ENCODE measurements at regions of chr9 and their contacts with region 1.

Region 1: DNA sequence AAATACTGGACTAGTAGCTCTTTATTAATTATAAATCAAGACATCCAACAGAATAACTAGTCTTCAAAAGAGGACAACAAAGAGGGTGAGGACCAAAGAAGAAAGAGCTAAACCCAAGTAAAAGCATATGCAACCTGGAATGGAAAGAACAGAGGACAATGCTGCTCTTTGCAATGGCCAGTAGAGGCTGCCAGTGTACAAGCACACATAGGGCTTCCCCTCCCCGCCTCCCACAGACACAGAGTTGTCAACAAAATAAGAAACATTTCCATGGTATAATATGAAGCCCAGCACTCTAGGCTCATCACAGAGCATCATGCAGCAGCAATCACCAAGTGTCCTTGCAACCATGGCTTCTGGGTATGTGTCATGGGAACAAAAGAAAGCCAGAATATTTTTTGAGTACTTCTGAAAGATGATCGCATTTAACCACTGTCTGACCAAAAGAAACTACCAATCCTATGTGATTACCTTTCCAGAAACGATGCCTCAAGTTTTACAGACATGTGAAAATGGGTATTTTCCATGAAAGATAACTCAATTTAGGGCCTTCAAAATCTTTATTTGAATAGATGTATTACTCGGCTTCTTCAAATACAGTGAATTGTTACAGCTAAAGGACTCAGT is 58.1 kb downstream of the RFX3 start:
- DNase-seq: peak; percentile 49 to 70 (median 60)
- ATAC-seq: peak; percentile 79 to 96 (median 94)
- H3K4me3 ChIP-seq: no peak overlapping the region
- H3K27ac ChIP-seq: no peak overlapping the region
- H3K4me1 ChIP-seq: peaks cover 0 to 25% (median 7%) of the 10 kb centered on the region in 12 donors
- H3K27me3 ChIP-seq: no peaks in the 10 kb centered on the region
- CTCF ChIP-seq: peak; percentile 67 to 90 (median 82)
- POLR2A ChIP-seq: no peak

Region 2: DNA sequence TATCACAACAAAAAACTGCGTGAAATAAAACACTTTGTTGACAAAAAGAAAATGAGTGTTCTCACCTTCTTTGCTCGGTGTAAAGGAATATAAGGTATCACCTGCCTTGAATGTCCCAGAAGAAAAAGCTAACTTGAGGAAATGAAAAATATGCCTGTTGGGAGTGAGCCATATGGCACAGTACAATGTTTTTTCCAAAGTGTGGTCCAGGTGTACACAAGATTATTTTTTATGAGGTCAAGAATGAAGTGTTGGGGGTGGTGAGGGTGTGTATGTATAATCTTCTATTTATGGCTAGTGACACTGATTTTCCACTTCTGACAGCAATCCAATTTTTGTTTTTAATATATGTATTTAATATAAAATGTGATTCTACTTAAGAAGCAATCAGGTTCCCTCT is 76.3 kb before region 1 on chr9:
- intact Hi-C with region 1: no loop called
- DNase-seq: no peak
- ATAC-seq: no peak
- H3K4me3 ChIP-seq: no peak overlapping the region
- H3K27ac ChIP-seq: no peak overlapping the region
- H3K4me1 ChIP-seq: peaks cover 0 to 1% (median 0%) of the 10 kb centered on the region in 12 donors
- H3K27me3 ChIP-seq: no peaks in the 10 kb centered on the region
- CTCF ChIP-seq: no peak
- POLR2A ChIP-seq: no peak

Region 3: DNA sequence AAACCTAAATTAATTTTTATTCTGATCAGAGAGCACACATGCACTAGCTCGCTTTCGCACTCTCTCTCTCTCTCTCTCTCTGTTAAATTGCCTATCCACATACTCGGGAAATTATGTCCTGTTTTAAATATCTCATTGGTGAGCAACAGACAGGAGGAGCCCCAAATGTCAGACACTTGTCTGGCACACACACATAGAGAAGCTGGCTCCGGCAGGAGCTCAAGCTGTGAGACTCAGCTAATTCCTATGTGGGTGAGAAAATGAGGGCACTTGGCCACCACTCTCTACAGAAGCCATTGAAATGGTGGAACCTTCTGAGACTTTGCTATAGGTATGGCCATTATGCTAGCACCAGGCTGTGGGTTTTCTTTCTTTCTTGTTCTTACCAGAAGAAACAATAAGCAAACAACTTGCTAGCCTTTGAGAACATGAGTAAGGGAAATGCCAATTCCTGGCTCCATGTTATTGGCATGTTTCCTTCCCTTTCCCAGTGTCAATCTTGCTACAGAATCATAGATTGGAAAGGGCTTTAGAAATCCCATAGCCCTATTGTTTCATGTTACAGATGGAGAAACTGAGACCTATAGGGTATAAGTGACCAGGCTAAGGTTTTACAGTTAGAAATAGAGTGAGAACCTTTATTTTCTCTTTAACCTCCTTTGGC is 49.1 kb after region 1 on chr9:
- intact Hi-C with region 1: loop called in 3 of 10 experiments (anchors 5 to 10 kb)
- DNase-seq: no peak
- ATAC-seq: no peak
- H3K4me3 ChIP-seq: no peak overlapping the region
- H3K27ac ChIP-seq: no peak overlapping the region
- H3K4me1 ChIP-seq: peaks cover 0 to 22% (median 0%) of the 10 kb centered on the region in 12 donors
- H3K27me3 ChIP-seq: no peaks in the 10 kb centered on the region
- CTCF ChIP-seq: no peak
- POLR2A ChIP-seq: no peak

Region 4: GRCh38 chr9:3525836-3526164 is 58.1 kb after region 1 on chr9 and contains the start of gene RFX3:
- intact Hi-C with region 1: loop called in 4 of 10 experiments (anchors 5 to 10 kb)
- DNase-seq: peak; percentile 92 to 95 (median 94)
- ATAC-seq: peak; percentile 95 to 97 (median 96)
- H3K4me3 ChIP-seq: peak within 1 kb of the TSS; percentile 47 to 95 (median 83)
- H3K27ac ChIP-seq: peak within 1 kb of the TSS; percentile 97 to 100 (median 100)
- H3K4me1 ChIP-seq: peaks cover 0 to 45% (median 17%) of the 10 kb centered on the region in 12 donors
- H3K27me3 ChIP-seq: no peaks in the 10 kb centered on the region
- CTCF ChIP-seq: no peak
- POLR2A ChIP-seq: peak in 1 of 2 donors; percentile 29
- total RNA-seq, gene RFX3: 1.7 to 8.3 (median 2.9) TPM

Region 5: DNA sequence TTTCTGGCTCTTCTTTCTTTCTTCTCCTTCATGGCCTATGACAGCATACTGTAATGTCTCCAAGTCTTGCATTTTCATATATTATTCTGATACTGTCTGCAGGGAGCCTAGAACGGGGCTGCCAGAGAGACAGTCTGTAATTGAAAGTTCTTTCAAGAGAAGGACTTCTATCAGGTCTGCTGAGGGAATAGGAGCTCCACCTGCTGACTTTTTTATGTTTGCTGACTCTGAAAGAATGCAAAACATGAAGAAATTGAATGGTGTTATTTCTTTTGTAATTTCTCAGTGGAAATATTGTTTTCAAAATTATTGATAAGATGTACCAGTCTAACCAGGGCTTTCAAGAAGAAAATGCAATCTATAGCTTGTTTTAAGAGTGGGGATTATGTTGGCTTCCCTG is 179.9 kb after region 1 on chr9:
- intact Hi-C with region 1: loop called in 3 of 10 experiments (anchors 5 to 10 kb)
- DNase-seq: no peak
- ATAC-seq: no peak
- H3K4me3 ChIP-seq: no peak overlapping the region
- H3K27ac ChIP-seq: no peak overlapping the region
- H3K4me1 ChIP-seq: no peaks in the 10 kb centered on the region
- H3K27me3 ChIP-seq: no peaks in the 10 kb centered on the region
- CTCF ChIP-seq: peak in 4 of 12 donors; percentile 7 to 10 (median 9)
- POLR2A ChIP-seq: no peak

Region 6: DNA sequence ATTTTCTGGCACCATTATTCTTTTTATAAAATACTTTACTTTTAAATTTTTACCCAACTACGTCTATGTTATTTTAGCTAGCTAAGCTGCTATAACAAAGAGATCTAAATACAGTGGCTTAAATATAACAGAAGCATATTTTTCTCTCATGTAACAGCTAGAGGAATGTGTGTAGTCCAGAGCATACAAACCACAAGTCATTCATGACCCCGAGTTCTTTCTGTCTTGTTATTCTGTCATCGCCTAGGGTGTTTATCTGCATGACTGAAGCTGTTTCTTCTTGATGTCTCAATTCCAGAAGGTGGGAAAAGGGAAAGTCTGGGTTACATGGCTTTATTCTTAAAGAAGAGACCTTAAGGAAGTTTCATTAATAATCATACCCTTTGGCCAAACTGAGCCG is 195.0 kb after region 1 on chr9:
- intact Hi-C with region 1: no loop called
- DNase-seq: no peak
- ATAC-seq: no peak
- H3K4me3 ChIP-seq: no peak overlapping the region
- H3K27ac ChIP-seq: no peak overlapping the region
- H3K4me1 ChIP-seq: peaks cover 0 to 4% (median 0%) of the 10 kb centered on the region in 12 donors
- H3K27me3 ChIP-seq: no peaks in the 10 kb centered on the region
- CTCF ChIP-seq: no peak
- POLR2A ChIP-seq: no peak

Region 7: GRCh38 chr9:3848445-3849114 is 380.9 kb after region 1 on chr9:
- intact Hi-C with region 1: no loop called
- DNase-seq: no peak
- ATAC-seq: no peak
- H3K4me3 ChIP-seq: no peak overlapping the region
- H3K27ac ChIP-seq: no peak overlapping the region
- H3K4me1 ChIP-seq: no peaks in the 10 kb centered on the region
- H3K27me3 ChIP-seq: no peaks in the 10 kb centered on the region
- CTCF ChIP-seq: no peak
- POLR2A ChIP-seq: no peak

Region 8: GRCh38 chr9:4117835-4118610 is 650.3 kb after region 1 on chr9:
- intact Hi-C with region 1: loop called in 1 of 10 experiments (anchors 10 kb)
- DNase-seq: peak in 1 of 5 donors; percentile 36
- ATAC-seq: peak in 1 of 4 donors; percentile 41
- H3K4me3 ChIP-seq: no peak overlapping the region
- H3K27ac ChIP-seq: peak overlapping the region in 3 of 12 donors; percentile 13 to 32 (median 25)
- H3K4me1 ChIP-seq: peaks cover 0 to 51% (median 0%) of the 10 kb centered on the region in 12 donors
- H3K27me3 ChIP-seq: no peaks in the 10 kb centered on the region
- CTCF ChIP-seq: peak in 10 of 12 donors; percentile 12 to 51 (median 40)
- POLR2A ChIP-seq: no peak

Region 9: GRCh38 chr9:4228606-4229005 is 760.9 kb after region 1 on chr9:
- intact Hi-C with region 1: loop called in 2 of 10 experiments (anchors 10 kb)
- DNase-seq: no peak
- ATAC-seq: peak in 3 of 4 donors; percentile 60 to 71 (median 68)
- H3K4me3 ChIP-seq: no peak overlapping the region
- H3K27ac ChIP-seq: no peak overlapping the region
- H3K4me1 ChIP-seq: peaks cover 0 to 10% (median 0%) of the 10 kb centered on the region in 12 donors
- H3K27me3 ChIP-seq: no peaks in the 10 kb centered on the region
- CTCF ChIP-seq: peak; percentile 27 to 71 (median 54)
- POLR2A ChIP-seq: no peak

Measured in heart left ventricle (tissue), 16 donors.